H1 (cell line): ENCODE measurements at regions of chr7 and their contacts with region 1.

Region 1: GRCh38 chr7:93728292-93728691 is 153.8 kb upstream of the CALCR start:
- DNase-seq: no peak
- H3K4me3 ChIP-seq: no peak overlapping the region
- H3K27ac ChIP-seq: no peak overlapping the region
- H3K4me1 ChIP-seq: no peaks in the 10 kb centered on the region
- H3K27me3 ChIP-seq: no peaks in the 10 kb centered on the region
- CTCF ChIP-seq: no peak
- EP300 ChIP-seq: no peak
- POLR2A ChIP-seq: no peak
- RAD21 ChIP-seq: no peak

Region 2: DNA sequence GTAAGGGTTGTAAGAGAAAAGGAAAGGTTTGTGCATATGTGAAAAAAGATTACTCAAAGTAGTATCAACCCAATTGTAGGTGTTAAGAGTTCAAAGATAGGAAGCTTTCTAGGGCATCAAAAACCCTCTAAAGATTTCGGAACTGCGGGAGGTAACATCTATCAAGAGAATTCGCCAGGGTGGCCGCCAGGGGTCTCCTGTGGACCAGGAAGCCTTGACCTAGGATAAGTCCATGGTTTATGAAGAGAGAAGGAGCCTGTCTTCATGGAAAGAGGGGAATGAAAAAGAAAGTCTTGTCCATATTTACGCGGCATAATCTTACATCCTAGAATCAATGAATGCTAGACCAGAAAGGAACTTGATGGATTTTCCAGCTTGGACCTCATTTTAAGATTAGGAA is 13.1 kb before region 1 on chr7:
- CTCF ChIA-PET with region 1: interaction called, 20 read pairs
- POLR2A ChIA-PET with region 1: no interaction called
- DNase-seq: peak; percentile 33 to 74
- H3K4me3 ChIP-seq: no peak overlapping the region
- H3K27ac ChIP-seq: no peak overlapping the region
- H3K4me1 ChIP-seq: no peaks in the 10 kb centered on the region
- H3K27me3 ChIP-seq: peaks cover 0 to 1% (median 0%) of the 10 kb centered on the region in 4 experiments; a peak in 1 of 7 replicates
- CTCF ChIP-seq: peak; percentile 64 to 71 (median 65)
- EP300 ChIP-seq: no peak
- POLR2A ChIP-seq: no peak
- RAD21 ChIP-seq: peak; percentile 78 to 86